CD8-positive, alpha-beta T cell (primary cell): ENCODE measurements at regions of chr3 and their contacts with region 1.

Region 1: DNA sequence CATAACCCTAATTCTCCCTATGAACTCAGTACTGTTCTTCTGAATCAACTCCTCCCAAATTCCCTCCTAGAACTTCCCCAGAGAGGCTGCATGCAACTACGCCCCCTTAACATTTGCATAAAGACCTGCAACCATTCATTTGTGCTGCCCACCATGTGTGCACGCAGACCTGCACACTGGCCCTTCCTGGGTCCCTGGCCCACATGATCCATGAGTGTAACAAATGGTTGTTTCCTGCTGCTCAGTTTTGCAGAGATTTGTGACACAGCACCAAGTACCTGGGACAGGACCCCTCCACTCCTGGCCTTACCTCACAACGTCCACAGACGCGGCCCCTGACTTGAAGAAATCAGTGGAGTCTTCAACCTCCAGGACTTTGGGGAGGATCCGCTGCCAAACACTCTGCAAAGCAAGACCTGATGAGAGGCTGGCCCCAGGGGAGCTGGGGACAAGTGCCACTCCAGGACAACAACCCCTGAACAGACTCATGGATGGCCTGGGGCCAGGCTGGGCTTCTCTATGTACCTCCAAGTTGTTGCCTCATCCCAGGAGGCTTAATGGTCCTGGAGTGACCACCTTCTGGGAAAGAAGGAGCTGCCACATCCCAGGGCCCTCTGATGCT is 33.8 kb downstream of the ALDH1L1 start:
- DNase-seq: peak in 2 of 9 experiments; percentile 4 to 41
- ATAC-seq: no peak
- H3K4me3 ChIP-seq: no peak overlapping the region
- H3K4me3 Mint-ChIP-seq: no peak overlapping the region
- H3K27ac ChIP-seq: no peak overlapping the region
- H3K27ac Mint-ChIP-seq: no peak overlapping the region
- H3K4me1 ChIP-seq: no peaks in the 10 kb centered on the region
- H3K4me1 Mint-ChIP-seq: no peaks in the 10 kb centered on the region
- H3K27me3 ChIP-seq: no peaks in the 10 kb centered on the region
- H3K27me3 Mint-ChIP-seq: no peaks in the 10 kb centered on the region
- CTCF ChIP-seq: no peak

Region 2: DNA sequence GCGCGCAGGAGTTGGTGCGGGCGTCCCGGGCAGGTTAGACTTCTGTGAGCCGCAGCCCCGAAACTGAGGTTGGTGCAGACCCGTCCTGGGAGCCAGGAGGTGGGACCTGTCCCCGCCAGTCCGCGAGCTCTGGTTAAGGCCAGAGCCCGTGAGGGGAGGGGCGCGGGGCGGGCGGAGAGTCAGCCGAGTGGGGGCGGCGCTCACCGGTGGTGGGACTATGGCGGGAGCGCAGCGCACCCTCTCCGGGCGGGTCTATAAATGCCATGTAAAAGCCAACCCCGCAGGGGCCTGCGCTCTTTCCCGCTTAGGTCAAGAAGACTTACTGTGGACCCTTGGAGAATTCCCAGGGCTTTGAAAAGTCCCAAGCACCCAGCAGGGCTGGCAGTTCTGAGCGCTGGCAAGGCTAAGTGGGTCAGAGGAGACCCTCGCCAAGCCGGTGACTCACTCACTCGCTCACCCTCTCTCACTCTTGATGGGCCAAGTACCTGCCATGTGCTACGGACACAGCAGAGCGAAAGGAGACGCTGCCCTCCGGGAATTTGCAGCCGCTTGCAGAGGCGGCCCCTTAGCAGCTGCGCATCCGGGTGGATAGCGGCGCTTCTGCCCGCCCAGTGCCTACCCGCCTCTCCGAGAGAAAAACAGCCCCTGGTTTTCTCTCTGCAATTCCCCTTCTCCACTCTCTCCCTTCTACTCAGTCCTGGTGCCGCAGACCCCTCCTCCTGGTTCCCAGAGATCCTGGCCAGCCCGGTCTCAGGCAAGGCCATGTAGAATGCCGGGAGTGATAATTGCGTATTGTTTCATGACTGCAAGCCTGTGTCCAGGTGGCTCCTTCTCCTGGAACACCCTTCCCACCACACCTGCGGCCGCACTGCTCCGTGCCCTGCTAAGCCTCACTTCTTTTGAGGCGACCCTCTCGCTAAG is 34.1 kb after region 1 on chr3 and contains the start of gene ALDH1L1:
- CTCF ChIA-PET with region 1: no interaction called
- POLR2A ChIA-PET with region 1: no interaction called
- intact Hi-C with region 1: no loop called
- DNase-seq: no peak
- ATAC-seq: no peak
- H3K4me3 ChIP-seq: no peak within 1 kb of the TSS
- H3K4me3 Mint-ChIP-seq: no peak within 1 kb of the TSS
- H3K27ac ChIP-seq: no peak within 1 kb of the TSS
- H3K27ac Mint-ChIP-seq: no peak within 1 kb of the TSS
- H3K4me1 ChIP-seq: no peaks in the 10 kb centered on the region
- H3K4me1 Mint-ChIP-seq: peaks cover 7% of the 10 kb centered on the region
- H3K27me3 ChIP-seq: peaks cover 0 to 2% of the 10 kb centered on the region in 2 experiments
- H3K27me3 Mint-ChIP-seq: peaks cover 39% of the 10 kb centered on the region
- CTCF ChIP-seq: no peak
- total RNA-seq, gene ALDH1L1: not detected

Region 3: GRCh38 chr3:126389112-126389793 is 242.6 kb after region 1 on chr3:
- CTCF ChIA-PET with region 1: no interaction called
- POLR2A ChIA-PET with region 1: no interaction called
- intact Hi-C with region 1: loop called in 1 of 2 experiments (anchors 5 kb)
- DNase-seq: peak in 5 of 9 experiments; percentile 4 to 56 (median 31)
- ATAC-seq: peak; percentile 40
- H3K4me3 ChIP-seq: no peak overlapping the region
- H3K4me3 Mint-ChIP-seq: peak overlapping the region; percentile 1
- H3K27ac ChIP-seq: no peak overlapping the region
- H3K27ac Mint-ChIP-seq: no peak overlapping the region
- H3K4me1 ChIP-seq: no peaks in the 10 kb centered on the region
- H3K4me1 Mint-ChIP-seq: peaks cover 4% of the 10 kb centered on the region
- H3K27me3 ChIP-seq: peaks cover 0 to 3% of the 10 kb centered on the region in 2 experiments
- H3K27me3 Mint-ChIP-seq: peaks cover 56% of the 10 kb centered on the region
- CTCF ChIP-seq: peak; percentile 16